Dendritic cell treated with granulocyte-macrophage colony-stimulating factor and Interleukin-4, amounts not matched to agents 40 ng/mL and 50 ng/mL, for 4 days (primary cell): ENCODE measurements at regions of chr14 and their contacts with region 1.

Region 1: GRCh38 chr14:100341301-100342031 is 18.3 kb downstream of the SLC25A47 start:
- H3K4me3 Mint-ChIP-seq: peak overlapping the region; percentile 59
- H3K27ac Mint-ChIP-seq: peak overlapping the region; percentile 96
- H3K4me1 Mint-ChIP-seq: peaks cover 54% of the 10 kb centered on the region
- H3K27me3 Mint-ChIP-seq: no peaks in the 10 kb centered on the region

Region 2: DNA sequence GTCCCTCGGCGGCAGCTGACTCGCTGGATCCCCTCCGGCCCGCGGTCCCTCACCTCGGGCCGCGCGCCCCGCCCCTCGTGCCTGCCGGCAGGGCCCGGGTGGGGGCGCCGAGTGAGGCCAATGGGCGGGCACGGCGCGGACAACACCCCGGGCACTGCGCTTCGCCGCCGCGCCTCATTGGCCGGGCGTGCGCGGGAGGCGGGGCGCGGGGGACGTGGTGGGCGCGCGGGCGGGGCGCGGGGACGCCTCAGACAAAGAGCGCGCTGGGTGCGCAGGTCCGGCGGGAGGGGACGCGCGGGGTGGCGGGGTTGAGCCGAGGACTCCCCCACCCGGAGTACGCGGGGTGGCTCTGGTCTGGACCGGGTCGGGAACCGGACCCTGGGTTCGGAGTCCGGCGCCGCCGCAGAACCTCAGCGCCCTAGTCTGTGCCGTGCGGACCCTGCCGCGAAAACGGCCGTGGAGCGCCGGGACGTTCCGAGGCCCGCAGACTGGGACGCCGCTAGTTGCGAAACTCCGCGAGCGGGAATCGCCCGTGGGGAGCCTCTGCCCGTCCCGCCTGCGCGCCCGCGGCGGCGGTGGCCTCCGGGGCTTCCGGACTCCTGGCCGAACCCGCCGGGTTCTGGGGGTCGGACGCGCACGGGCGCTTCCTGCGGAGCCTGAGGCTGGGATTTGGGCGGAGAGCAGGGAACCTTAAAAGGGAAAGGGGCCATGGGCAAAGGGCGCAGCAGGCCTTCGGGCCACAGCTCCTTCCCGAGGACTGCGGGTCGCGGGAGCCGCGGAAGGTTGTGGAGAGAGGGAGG is 34.8 kb before region 1 on chr14 and contains the start of gene SLC25A29:
- intact Hi-C with region 1: loop called (anchors 5 kb)
- H3K4me3 Mint-ChIP-seq: peak within 1 kb of the TSS; percentile 86
- H3K27ac Mint-ChIP-seq: peak within 1 kb of the TSS; percentile 92
- H3K4me1 Mint-ChIP-seq: peaks cover 72% of the 10 kb centered on the region
- H3K27me3 Mint-ChIP-seq: peaks cover 3% of the 10 kb centered on the region